Esophagus muscularis mucosa (tissue), 4 donors: ENCODE measurements at regions of chr19 and their contacts with region 1.

Region 1: DNA sequence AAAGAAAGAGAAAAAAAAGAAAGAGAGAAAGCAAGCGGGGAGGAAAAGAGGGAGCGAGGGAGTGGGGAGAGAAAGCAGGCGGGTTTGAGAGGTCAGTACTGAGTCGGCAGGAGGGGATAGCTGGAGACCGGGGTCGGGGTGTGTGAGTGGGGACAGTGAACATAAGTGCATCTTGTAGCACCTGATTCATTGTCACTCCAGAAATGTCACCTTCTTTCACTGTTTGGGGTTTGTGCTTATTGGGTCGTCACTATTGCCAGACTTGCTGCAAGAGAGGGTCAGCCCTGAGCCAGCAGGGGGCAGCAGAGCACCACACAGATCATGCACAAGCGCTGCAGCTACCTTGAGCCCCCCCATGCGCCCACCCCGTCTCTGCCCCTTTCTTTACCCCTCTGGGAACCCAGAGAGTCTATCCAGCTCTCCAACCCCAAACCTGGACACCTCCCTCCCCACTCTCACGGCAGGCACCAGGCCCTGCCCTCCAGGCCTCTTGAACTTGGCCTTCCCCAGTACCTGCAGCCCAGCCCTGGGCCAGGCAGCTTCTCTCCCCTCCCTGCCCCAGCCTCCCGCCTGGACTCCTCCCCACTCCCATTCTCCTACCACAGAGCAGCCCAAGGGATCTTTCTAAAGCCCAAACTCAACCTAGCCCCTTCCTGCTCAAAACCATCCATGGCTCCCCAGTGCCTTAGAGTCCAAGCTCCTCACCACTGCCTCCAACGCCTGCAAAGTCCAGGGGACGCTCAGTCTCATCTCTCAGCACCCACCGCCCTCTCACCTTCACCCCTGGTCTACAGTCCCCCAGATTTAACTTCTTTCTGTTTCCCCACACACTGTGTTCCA is 9.7 kb upstream of the CEACAM16 start:
- DNase-seq: no peak
- H3K4me3 ChIP-seq: no peak overlapping the region
- H3K27ac ChIP-seq: no peak overlapping the region
- H3K4me1 ChIP-seq: peaks cover 17 to 26% (median 21%) of the 10 kb centered on the region in 4 donors
- H3K27me3 ChIP-seq: no peaks in the 10 kb centered on the region
- CTCF ChIP-seq: peak in 2 of 3 experiments; percentile 85 to 92
- EP300 ChIP-seq: no peak
- POLR2A ChIP-seq: no peak

Region 2: GRCh38 chr19:44723952-44724319 is 34.7 kb after region 1 on chr19:
- intact Hi-C with region 1: loop called (anchors 5 kb)
- DNase-seq: peak; percentile 95
- H3K4me3 ChIP-seq: no peak overlapping the region
- H3K27ac ChIP-seq: peak overlapping the region in 2 of 4 donors; percentile 21 to 49
- H3K4me1 ChIP-seq: peaks cover 33 to 43% (median 39%) of the 10 kb centered on the region in 4 donors
- H3K27me3 ChIP-seq: no peaks in the 10 kb centered on the region
- CTCF ChIP-seq: peak; percentile 95 to 98 (median 97)
- EP300 ChIP-seq: no peak
- POLR2A ChIP-seq: no peak

Region 3: GRCh38 chr19:44770550-44771257 is 81.4 kb after region 1 on chr19:
- intact Hi-C with region 1: loop called (anchors 2 kb)
- DNase-seq: peak; percentile 97
- H3K4me3 ChIP-seq: no peak overlapping the region
- H3K27ac ChIP-seq: no peak overlapping the region
- H3K4me1 ChIP-seq: peaks cover 0 to 12% (median 7%) of the 10 kb centered on the region in 4 donors
- H3K27me3 ChIP-seq: peaks cover 0 to 3% (median 0%) of the 10 kb centered on the region in 4 donors
- CTCF ChIP-seq: peak; percentile 89 to 92 (median 90)
- EP300 ChIP-seq: no peak
- POLR2A ChIP-seq: no peak

Region 4: GRCh38 chr19:44845612-44846454 is 156.6 kb after region 1 on chr19 and contains the start of gene NECTIN2:
- intact Hi-C with region 1: loop called (anchors 1 kb)
- DNase-seq: peak; percentile 100
- H3K4me3 ChIP-seq: peak within 1 kb of the TSS; percentile 82 to 100 (median 99)
- H3K27ac ChIP-seq: peak within 1 kb of the TSS; percentile 95 to 98 (median 98)
- H3K4me1 ChIP-seq: peaks cover 37 to 57% (median 48%) of the 10 kb centered on the region in 4 donors
- H3K27me3 ChIP-seq: no peaks in the 10 kb centered on the region
- CTCF ChIP-seq: peak; percentile 62 to 84 (median 67)
- EP300 ChIP-seq: no peak
- POLR2A ChIP-seq: peak; percentile 91
- total RNA-seq, gene NECTIN2: 34.5 to 72.4 (median 60.1) TPM